Activated CD4-positive, alpha-beta T cell treated with anti-CD3 and anti-CD28 coated beads for 36 hours (primary cell): ENCODE measurements at regions of chr17 and their contacts with region 1.

Region 1: DNA sequence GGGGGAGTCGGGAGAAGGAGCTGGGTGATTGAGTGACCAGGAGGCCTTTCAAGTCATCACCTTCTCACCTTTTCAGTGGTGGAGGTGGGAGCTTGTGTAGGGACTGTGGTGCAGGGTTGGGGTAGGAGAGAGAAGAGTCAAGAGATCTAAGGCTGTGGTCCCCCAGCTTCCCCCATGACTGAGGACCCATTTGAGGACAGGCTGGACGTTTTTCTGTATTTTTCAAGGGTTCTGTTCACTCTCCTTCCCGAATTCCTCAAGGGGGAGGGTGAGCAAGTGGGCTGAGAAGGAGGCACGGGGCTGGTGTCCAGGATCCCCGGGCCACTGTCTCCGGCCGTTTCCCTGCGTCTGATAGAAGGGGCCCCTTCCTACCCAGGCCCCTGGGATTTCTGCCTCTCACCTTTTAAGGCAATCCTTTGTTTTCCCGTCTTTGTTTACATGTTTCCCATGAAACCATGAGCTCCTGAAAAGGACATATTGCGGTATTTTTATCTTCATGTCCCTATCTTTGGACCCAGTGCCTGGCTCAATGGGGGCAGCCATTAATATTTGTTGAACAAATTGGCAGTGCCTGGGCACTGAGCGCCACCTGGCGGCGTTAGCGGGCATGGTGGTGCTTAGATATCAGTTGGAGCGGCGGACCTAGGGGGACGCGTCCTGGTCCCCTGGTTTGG is 9.2 kb upstream of the CD300A start:
- DNase-seq: peak; percentile 83
- ATAC-seq: peak; percentile 49
- H3K4me3 Mint-ChIP-seq: no peak overlapping the region
- H3K27ac Mint-ChIP-seq: no peak overlapping the region
- H3K4me1 Mint-ChIP-seq: peaks cover 9% of the 10 kb centered on the region
- H3K27me3 Mint-ChIP-seq: peaks cover 6% of the 10 kb centered on the region

Region 2: DNA sequence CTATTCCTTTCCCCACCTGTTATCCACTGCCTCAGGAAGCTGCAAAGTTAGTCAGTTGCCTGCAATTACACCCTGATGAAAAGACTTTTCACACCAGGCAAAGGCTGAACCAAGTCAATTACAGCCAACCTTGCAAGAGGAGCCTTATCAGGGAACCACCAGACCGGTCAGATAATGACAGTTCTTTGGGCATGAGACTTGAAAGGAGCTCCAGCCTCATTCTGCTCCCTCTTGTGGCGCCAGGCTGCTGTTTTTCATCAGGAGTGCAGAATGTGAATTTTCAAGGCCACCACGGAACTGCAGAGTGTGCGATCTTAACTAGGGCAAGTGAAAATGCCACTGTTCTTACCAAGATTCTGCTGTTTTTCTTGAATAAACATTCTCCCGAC is 160.7 kb before region 1 on chr17:
- CTCF ChIA-PET with region 1: interaction called, 3 read pairs
- POLR2A ChIA-PET with region 1: no interaction called
- intact Hi-C with region 1: loop called (anchors 1 to 10 kb)
- DNase-seq: peak; percentile 59
- ATAC-seq: peak; percentile 24
- H3K4me3 Mint-ChIP-seq: no peak overlapping the region
- H3K27ac Mint-ChIP-seq: no peak overlapping the region
- H3K4me1 Mint-ChIP-seq: peaks cover 23% of the 10 kb centered on the region
- H3K27me3 Mint-ChIP-seq: peaks cover 5% of the 10 kb centered on the region

Region 3: DNA sequence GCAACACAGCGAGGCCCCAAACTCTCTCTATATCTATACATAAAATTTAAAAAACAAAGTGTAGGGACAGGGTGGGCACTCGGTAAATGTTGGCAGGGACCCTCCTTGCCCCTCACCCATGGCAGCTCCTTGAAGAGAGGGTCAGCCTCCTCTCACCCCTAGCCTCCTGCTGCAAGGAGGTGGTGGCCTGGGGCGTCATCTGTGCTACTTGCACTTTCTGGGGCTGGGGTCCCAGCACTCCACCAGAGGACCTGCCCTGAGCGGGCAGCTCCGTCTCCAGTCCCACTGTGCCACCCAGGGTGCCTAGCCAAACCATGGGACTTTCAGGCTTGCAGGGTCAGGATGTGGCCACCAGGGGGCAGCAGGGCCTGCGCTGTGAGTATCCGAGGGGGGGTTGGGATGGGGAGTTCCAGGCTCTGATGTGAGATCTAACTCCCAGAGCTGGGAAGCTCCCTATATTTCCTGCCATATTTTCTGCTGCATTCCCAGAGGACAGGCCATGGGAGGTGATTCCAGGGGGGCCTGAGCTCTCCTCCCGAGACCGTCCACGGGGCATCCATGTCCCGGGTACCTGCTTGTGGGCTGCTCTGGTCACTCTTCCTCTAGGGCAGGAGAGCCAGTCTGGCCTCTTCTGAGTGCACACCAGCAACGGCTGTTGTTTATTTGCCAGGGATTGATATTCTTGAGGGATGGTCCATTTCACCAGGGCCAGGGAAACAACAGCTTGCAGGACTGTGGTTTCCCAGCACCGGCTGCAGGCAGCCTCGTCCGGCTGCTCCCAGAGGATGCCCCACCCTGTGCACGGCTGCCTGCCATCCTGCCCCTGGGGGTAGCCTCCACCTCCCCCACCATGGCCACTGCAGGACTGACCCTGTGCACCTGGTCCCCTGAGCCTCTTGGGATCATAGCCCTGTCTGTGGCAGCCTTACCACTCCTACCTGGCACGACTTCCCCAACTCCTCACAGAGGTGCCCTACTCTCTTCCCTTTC is 88.9 kb before region 1 on chr17:
- CTCF ChIA-PET with region 1: interaction called, 25 read pairs
- POLR2A ChIA-PET with region 1: no interaction called
- intact Hi-C with region 1: loop called in 1 of 2 experiments (anchors 1 kb)
- DNase-seq: peak; percentile 84
- ATAC-seq: peak; percentile 74
- H3K4me3 Mint-ChIP-seq: peak overlapping the region; percentile 15
- H3K27ac Mint-ChIP-seq: no peak overlapping the region
- H3K4me1 Mint-ChIP-seq: peaks cover 13% of the 10 kb centered on the region
- H3K27me3 Mint-ChIP-seq: peaks cover 2% of the 10 kb centered on the region

Region 4: DNA sequence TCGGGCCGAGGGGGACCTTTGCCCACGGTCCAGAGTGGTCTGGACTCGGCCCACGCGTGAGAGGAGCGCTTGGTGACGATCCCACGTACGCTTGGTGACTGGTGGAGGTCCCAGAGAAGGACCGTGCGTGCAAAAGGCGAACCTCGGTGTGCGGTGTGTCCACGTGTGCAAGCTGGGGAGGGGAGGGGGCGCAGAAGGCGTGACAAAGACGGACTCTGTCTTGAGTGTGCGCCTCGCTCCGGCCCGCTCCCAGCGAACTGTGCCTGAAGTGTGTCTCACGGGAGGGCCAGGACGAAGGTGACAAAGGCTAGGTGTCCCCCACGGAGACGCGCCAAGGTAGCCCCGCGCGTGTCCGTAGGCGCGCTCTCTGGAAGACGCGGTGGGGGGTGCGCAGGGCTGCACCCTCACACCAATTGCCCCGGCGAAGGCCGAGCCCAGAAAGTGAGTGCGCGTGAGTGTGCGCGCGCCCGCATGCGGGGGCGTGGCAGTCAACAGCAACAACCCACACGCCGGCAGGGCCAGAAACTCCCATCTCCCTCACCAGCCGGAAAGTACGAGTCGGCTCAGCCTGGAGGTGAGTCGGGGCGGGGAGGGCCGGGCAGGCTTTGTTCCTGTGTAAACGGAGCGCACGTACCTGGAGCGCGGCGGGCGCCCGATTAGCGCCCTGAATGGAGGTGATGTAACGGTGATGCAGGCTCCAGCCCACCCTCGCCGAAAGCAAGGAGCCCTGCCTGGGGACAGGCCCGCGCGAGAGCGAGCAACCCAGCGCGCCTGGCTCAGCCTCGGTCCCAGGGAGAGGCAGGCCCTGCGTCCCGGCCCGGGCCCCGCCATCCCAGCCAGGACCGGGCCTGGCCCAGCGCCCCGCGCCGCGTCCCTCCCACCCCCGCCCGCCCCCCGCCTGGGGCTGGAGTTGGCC is 25.5 kb before region 1 on chr17 and contains the start of gene GPRC5C:
- CTCF ChIA-PET with region 1: interaction called, 3 read pairs
- POLR2A ChIA-PET with region 1: no interaction called
- intact Hi-C with region 1: loop called in 1 of 2 experiments (anchors 1 kb)
- DNase-seq: peak; percentile 83
- ATAC-seq: peak; percentile 85
- H3K4me3 Mint-ChIP-seq: peak within 1 kb of the TSS; percentile 53
- H3K27ac Mint-ChIP-seq: no peak within 1 kb of the TSS
- H3K4me1 Mint-ChIP-seq: peaks cover 15% of the 10 kb centered on the region
- H3K27me3 Mint-ChIP-seq: peaks cover 47% of the 10 kb centered on the region
- total RNA-seq, gene GPRC5C: 0.97 to 1.3 TPM

Region 5: DNA sequence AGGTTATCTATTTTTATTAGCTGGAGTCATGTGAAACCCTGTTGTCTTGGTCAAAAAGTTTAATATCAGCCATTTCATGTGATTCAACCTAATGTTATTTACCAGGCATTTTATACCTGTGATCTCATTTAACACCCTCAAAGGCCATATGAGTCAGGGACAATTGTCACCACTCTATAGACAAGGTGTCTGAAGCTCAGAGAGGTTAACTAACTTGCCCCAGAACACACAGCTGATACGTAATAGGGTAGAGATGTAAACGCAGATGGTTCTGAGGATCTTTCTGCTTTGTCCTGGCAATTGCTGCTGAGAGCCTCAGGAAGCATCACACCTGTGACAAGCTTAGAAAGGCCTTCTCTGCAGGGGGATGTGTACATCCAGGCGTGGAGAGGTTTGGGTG is 14.1 kb after region 1 on chr17:
- CTCF ChIA-PET with region 1: interaction called, 18 read pairs
- POLR2A ChIA-PET with region 1: no interaction called
- intact Hi-C with region 1: no loop called
- DNase-seq: no peak
- ATAC-seq: peak; percentile 54
- H3K4me3 Mint-ChIP-seq: no peak overlapping the region
- H3K27ac Mint-ChIP-seq: no peak overlapping the region
- H3K4me1 Mint-ChIP-seq: peaks cover 33% of the 10 kb centered on the region
- H3K27me3 Mint-ChIP-seq: no peaks in the 10 kb centered on the region

Region 6: GRCh38 chr17:74528491-74529199 is 71.4 kb after region 1 on chr17:
- CTCF ChIA-PET with region 1: interaction called, 3 read pairs
- POLR2A ChIA-PET with region 1: no interaction called
- intact Hi-C with region 1: loop called in 1 of 2 experiments (anchors 1 kb)
- DNase-seq: no peak
- ATAC-seq: peak; percentile 44
- H3K4me3 Mint-ChIP-seq: no peak overlapping the region
- H3K27ac Mint-ChIP-seq: no peak overlapping the region
- H3K4me1 Mint-ChIP-seq: peaks cover 2% of the 10 kb centered on the region
- H3K27me3 Mint-ChIP-seq: peaks cover 7% of the 10 kb centered on the region